AG04450 (cell line): ENCODE measurements at regions of chr11 and their contacts with region 1.

Region 1: GRCh38 chr11:72030472-72031045 is 31.9 kb downstream of the IL18BP start:
- DNase-seq: no peak
- H3K4me3 ChIP-seq: no peak overlapping the region
- H3K27ac ChIP-seq: no peak overlapping the region
- H3K27me3 ChIP-seq: no peaks in the 10 kb centered on the region
- CTCF ChIP-seq: no peak

Region 2: GRCh38 chr11:71934213-71934612 is 96.3 kb before region 1 on chr11:
- CTCF ChIA-PET with region 1: no interaction called
- POLR2A ChIA-PET with region 1: no interaction called
- DNase-seq: no peak
- H3K4me3 ChIP-seq: no peak overlapping the region
- H3K27ac ChIP-seq: no peak overlapping the region
- H3K27me3 ChIP-seq: no peaks in the 10 kb centered on the region
- CTCF ChIP-seq: no peak

Region 3: DNA sequence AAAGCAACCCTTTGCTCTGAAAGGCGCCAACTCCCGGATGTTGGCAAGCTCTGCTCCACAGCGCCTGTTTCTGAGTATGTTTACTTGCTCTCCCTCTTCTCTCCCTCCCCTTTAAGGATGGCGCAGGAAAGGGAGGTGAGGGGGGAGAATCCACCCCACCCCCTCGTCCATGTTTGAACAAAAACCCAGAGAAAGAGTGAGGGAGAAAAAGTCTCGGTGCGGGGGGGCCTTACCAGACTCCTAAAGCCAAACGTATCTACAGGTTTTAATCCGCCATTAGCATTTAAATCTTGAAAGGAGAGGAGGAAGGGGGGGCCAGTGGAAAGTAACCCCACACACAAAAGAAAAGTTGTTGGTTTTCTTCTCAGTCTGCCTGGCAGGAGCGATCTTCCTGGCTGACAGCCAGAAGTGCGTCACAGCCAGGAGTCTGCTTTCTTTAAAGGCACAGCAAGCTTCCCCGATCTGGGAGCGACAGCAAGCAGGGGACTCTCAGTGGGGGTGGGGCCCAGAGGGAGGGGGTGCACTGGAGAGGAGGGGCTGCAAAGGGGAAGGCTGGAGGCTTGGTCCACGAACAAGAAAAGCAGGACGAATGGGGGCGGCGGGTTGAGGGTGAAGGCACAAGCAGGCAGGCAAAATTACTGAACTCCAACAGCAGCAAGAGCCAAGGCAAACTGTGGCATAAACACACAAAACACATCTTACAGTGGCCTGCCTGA is 10.3 kb after region 1 on chr11:
- CTCF ChIA-PET with region 1: interaction called, 44 read pairs
- POLR2A ChIA-PET with region 1: interaction called, 12 read pairs
- DNase-seq: peak; percentile 89
- H3K4me3 ChIP-seq: peak overlapping the region; percentile 88
- H3K27ac ChIP-seq: peak overlapping the region; percentile 99
- H3K27me3 ChIP-seq: no peaks in the 10 kb centered on the region
- CTCF ChIP-seq: no peak

Region 4: GRCh38 chr11:72080256-72080974 is 49.9 kb after region 1 on chr11 and contains the starts of genes LRRC51 and NUMA1:
- CTCF ChIA-PET with region 1: interaction called, 75 read pairs
- POLR2A ChIA-PET with region 1: interaction called, 5 read pairs
- DNase-seq: peak; percentile 100
- H3K4me3 ChIP-seq: peak within 1 kb of the TSS; percentile 73
- H3K27ac ChIP-seq: peak within 1 kb of the TSS; percentile 83
- H3K27me3 ChIP-seq: no peaks in the 10 kb centered on the region
- CTCF ChIP-seq: no peak
- polyA plus RNA-seq, gene LRRC51: 7.8 and 8.6 TPM in 2 replicates
- polyA plus RNA-seq, gene NUMA1: 79.5 and 90.7 TPM in 2 replicates

Region 5: DNA sequence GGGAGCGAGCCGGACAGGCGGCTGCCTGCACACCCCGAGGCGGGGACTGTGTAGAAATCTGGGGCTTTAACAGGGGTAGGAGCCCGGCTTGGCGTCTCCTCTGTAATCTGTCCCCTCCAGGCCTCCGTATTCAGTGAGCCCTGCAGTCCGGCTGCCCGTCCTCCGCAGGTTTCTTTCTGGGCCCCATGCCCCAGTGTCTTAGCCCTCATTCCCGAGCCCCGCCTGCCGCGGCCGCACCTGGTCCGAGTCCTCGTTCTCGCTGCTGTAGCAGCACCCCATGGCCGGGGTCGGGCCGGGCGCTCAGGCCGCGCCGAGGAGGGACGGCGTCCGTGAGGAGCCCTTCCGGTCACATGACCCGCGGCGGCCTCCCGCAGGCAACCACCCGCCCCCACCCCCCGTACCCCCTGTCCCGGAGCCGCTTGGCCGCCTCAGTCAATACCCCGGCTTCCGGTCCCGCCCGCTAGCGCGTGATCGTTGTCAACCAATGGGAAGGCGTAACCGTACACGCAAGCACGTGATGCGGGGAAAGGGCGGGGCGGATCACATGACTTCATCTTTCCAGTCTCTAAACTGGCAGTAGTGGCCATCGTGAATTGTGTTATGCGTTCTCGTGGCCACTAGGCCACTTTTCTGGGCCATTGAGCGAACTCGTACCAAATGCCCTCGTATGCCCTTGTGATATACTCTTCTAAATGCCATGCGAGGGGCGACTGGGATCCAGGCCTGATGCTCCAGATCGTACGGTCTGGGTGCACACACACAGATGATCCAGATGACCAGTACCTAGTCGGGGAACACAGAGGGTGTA is 72.6 kb after region 1 on chr11 and contains the start of gene LAMTOR1:
- CTCF ChIA-PET with region 1: interaction called, 52 read pairs
- POLR2A ChIA-PET with region 1: no interaction called
- DNase-seq: peak; percentile 98
- H3K4me3 ChIP-seq: peak within 1 kb of the TSS; percentile 82
- H3K27ac ChIP-seq: peak within 1 kb of the TSS; percentile 90
- H3K27me3 ChIP-seq: no peaks in the 10 kb centered on the region
- CTCF ChIP-seq: peak; percentile 46
- polyA plus RNA-seq, gene LAMTOR1: 89.1 and 120 TPM in 2 replicates

Region 6: GRCh38 chr11:72189461-72190275 is 159.1 kb after region 1 on chr11:
- CTCF ChIA-PET with region 1: interaction called, 87 read pairs
- POLR2A ChIA-PET with region 1: no interaction called
- DNase-seq: no peak
- H3K4me3 ChIP-seq: no peak overlapping the region
- H3K27ac ChIP-seq: no peak overlapping the region
- H3K27me3 ChIP-seq: no peaks in the 10 kb centered on the region
- CTCF ChIP-seq: no peak